ENCODE measurements at regions of chr11 and their contacts with region 1.

Region 1: DNA sequence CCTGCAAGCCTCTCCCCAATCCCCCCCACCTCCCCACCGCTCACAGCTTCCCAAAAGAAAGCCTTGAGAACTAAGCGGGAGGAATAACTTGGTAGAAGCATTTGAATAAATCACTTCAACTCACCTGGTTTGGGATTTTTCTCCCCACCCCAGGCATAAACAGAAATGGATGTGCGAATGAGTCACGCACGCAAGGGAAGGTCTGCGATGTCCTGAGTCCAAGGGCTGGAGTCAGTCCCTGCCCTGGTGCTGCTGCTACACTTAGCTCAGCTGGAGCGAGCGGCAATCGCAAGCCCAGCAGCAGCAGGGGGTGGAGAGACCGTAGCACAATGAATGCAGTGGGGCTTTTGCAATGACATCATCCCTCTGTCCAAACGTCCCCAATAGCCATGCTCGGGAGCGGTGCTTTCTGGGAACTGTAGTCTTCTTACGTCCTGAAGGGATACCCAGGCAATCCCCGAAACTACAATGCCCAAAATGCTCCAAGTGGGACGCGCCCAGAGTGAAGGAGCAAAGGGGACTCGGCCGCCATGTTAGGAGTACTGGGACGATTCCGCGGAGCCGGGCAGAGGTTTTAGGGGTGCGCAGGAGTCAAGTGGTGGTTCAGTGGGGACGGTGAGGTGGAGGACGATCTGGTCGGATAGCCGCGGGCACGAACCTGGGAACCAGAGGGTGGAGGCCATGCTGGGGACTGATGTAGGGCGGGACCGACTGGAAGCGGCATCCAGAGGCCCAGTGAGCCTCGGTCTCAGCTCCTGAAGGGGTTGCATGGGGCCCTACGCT is at the start of gene RAB30:
- DNase-seq: peak; percentile 84 to 99 (median 91)
- ATAC-seq: peak; percentile 94
- H3K4me3 ChIP-seq: peak within 1 kb of the TSS; percentile 86 to 91
- H3K4me3 Mint-ChIP-seq: no peak within 1 kb of the TSS
- H3K27ac ChIP-seq: peak within 1 kb of the TSS; percentile 91 to 96
- H3K27ac Mint-ChIP-seq: no peak within 1 kb of the TSS
- H3K4me1 ChIP-seq: peaks cover 34% of the 10 kb centered on the region
- H3K4me1 Mint-ChIP-seq: peaks cover 16% of the 10 kb centered on the region
- H3K27me3 ChIP-seq: no peaks in the 10 kb centered on the region
- H3K27me3 Mint-ChIP-seq: no peaks in the 10 kb centered on the region
- CTCF ChIP-seq: no peak
- total RNA-seq, gene RAB30: 125 to 134 TPM

Region 2: DNA sequence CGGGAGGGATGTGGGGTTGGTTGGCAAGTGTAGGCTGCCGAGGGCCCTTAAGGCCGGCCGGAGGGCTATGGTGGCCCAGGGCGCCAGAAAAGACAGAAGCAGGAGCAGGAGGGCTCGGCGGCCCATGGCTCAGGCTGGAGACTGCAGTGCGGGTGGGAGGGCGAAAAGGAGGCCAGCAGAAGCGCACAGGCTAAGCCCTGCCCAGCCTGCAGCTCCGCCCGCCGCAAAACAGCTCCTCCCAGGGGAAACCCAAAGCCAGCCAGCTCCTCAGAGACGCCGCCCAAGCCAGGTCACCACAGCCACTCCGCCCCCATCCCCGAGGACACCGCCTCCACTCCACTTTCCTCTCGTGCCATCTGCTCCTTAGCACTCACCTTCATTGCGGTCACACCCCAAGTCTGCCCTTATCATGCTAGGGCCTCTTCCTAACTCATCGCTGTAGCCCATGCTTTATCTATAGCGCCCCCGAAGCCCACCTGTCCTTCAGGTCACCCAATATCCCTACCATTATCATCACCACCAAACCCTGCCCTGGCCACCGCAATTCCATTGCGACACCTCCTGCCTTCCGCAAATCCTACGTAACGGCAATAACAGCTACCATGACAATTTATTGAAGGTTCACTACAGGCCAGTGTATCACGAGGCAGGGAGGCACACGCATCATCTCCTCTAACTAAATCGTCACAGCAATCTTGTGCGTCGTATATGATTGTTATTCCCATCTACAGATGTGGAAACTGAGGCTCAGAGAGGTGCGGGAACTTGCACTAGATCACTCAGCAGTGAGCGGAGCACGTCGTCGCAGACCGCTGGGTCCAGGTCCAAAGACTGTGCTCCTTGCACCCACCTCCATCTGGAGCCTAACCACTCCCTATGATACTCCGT is 171.2 kb before region 1 on chr11 and contains the start of gene PRCP:
- CTCF ChIA-PET with region 1: interaction called, 3 read pairs
- POLR2A ChIA-PET with region 1: interaction called, 14 read pairs
- intact Hi-C with region 1: loop called (anchors 1 kb)
- DNase-seq: peak; percentile 84 to 96 (median 92)
- ATAC-seq: peak; percentile 69
- H3K4me3 ChIP-seq: peak within 1 kb of the TSS; percentile 76 to 93
- H3K4me3 Mint-ChIP-seq: peak within 1 kb of the TSS; percentile 99
- H3K27ac ChIP-seq: peak within 1 kb of the TSS; percentile 94 to 96
- H3K27ac Mint-ChIP-seq: peak within 1 kb of the TSS; percentile 100
- H3K4me1 ChIP-seq: peaks cover 26% of the 10 kb centered on the region
- H3K4me1 Mint-ChIP-seq: peaks cover 48% of the 10 kb centered on the region
- H3K27me3 ChIP-seq: no peaks in the 10 kb centered on the region
- H3K27me3 Mint-ChIP-seq: no peaks in the 10 kb centered on the region
- CTCF ChIP-seq: no peak
- total RNA-seq, gene PRCP: 23.9 to 27.8 TPM

Region 3: GRCh38 chr11:82959987-82960778 is 111.6 kb before region 1 on chr11:
- CTCF ChIA-PET with region 1: interaction called, 4 read pairs
- POLR2A ChIA-PET with region 1: interaction called, 4 read pairs
- intact Hi-C with region 1: loop called in 1 of 2 experiments (anchors 1 kb)
- DNase-seq: peak in 7 of 9 experiments; percentile 25 to 89 (median 42)
- ATAC-seq: peak; percentile 78
- H3K4me3 ChIP-seq: peak overlapping the region; percentile 23 to 38
- H3K4me3 Mint-ChIP-seq: peak overlapping the region; percentile 55
- H3K27ac ChIP-seq: peak overlapping the region; percentile 79 to 89
- H3K27ac Mint-ChIP-seq: peak overlapping the region; percentile 98
- H3K4me1 ChIP-seq: peaks cover 92% of the 10 kb centered on the region
- H3K4me1 Mint-ChIP-seq: peaks cover 87% of the 10 kb centered on the region
- H3K27me3 ChIP-seq: no peaks in the 10 kb centered on the region
- H3K27me3 Mint-ChIP-seq: no peaks in the 10 kb centered on the region
- CTCF ChIP-seq: no peak

Region 4: GRCh38 chr11:83087035-83087434 is 15.3 kb after region 1 on chr11:
- CTCF ChIA-PET with region 1: interaction called, 3 read pairs
- POLR2A ChIA-PET with region 1: interaction called, 5 read pairs
- intact Hi-C with region 1: loop called in 1 of 2 experiments (anchors 1 kb)
- DNase-seq: peak in 1 of 9 experiments; percentile 16
- ATAC-seq: no peak
- H3K4me3 ChIP-seq: no peak overlapping the region
- H3K4me3 Mint-ChIP-seq: no peak overlapping the region
- H3K27ac ChIP-seq: no peak overlapping the region
- H3K27ac Mint-ChIP-seq: peak overlapping the region; percentile 19
- H3K4me1 ChIP-seq: no peaks in the 10 kb centered on the region
- H3K4me1 Mint-ChIP-seq: peaks cover 21% of the 10 kb centered on the region
- H3K27me3 ChIP-seq: no peaks in the 10 kb centered on the region
- H3K27me3 Mint-ChIP-seq: no peaks in the 10 kb centered on the region
- CTCF ChIP-seq: no peak

Region 5: DNA sequence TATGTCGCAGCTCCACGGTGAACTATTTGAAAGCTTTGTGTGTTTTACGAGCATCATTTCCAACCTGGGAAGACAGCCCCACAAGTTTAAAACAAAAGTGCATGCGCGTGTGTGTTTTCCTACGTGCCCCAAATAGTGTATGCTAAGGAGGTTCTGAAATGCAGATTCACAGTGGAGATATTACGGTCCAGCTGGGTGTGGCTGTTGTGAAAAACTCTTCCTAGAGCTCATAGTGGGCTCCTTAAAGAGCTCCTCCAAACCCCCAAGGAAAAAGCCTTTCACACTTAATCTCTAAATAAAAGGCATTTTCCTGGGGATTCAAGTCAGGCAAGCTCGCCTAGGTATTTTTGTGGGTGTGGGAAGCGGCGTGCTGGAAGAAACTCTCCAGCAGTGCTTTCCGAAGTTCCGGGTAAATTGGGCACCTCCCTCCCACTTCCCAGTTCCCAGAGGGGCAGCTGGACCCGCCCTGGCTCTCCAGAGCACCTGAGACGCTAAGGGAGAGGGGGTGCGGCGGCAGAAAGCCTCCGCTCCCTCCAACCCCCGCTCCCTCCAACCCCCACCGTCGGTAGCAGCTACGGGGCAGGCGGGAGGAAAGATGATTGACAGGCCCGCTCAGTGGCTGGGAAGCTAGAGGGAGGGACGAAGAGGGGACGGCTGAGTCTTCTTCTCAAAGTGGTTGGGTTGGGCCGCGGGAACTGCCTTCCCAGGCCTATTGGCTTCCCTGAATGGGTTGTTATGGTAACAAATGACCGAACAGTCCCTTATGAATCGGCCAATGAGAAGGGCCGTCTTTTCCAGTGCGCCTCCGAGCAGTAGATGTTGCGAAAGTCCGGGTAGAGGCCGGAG is 84.6 kb after region 1 on chr11:
- CTCF ChIA-PET with region 1: interaction called, 6 read pairs
- POLR2A ChIA-PET with region 1: interaction called, 54 read pairs
- intact Hi-C with region 1: loop called (anchors 1 kb)
- DNase-seq: peak; percentile 94 to 100 (median 97)
- ATAC-seq: peak; percentile 83
- H3K4me3 ChIP-seq: peak overlapping the region; percentile 89 to 98
- H3K4me3 Mint-ChIP-seq: peak overlapping the region; percentile 100
- H3K27ac ChIP-seq: peak overlapping the region; percentile 97
- H3K27ac Mint-ChIP-seq: peak overlapping the region; percentile 100
- H3K4me1 ChIP-seq: peaks cover 13% of the 10 kb centered on the region
- H3K4me1 Mint-ChIP-seq: peaks cover 28% of the 10 kb centered on the region
- H3K27me3 ChIP-seq: no peaks in the 10 kb centered on the region
- H3K27me3 Mint-ChIP-seq: no peaks in the 10 kb centered on the region
- CTCF ChIP-seq: no peak

Region 6: GRCh38 chr11:83249972-83250593 is 178.3 kb after region 1 on chr11:
- CTCF ChIA-PET with region 1: interaction called, 5 read pairs
- POLR2A ChIA-PET with region 1: no interaction called
- intact Hi-C with region 1: loop called in 1 of 2 experiments (anchors 5 kb)
- DNase-seq: peak in 4 of 9 experiments; percentile 11 to 72 (median 40)
- ATAC-seq: peak; percentile 76
- H3K4me3 ChIP-seq: no peak overlapping the region
- H3K4me3 Mint-ChIP-seq: no peak overlapping the region
- H3K27ac ChIP-seq: no peak overlapping the region
- H3K27ac Mint-ChIP-seq: no peak overlapping the region
- H3K4me1 ChIP-seq: no peaks in the 10 kb centered on the region
- H3K4me1 Mint-ChIP-seq: peaks cover 3% of the 10 kb centered on the region
- H3K27me3 ChIP-seq: no peaks in the 10 kb centered on the region
- H3K27me3 Mint-ChIP-seq: no peaks in the 10 kb centered on the region
- CTCF ChIP-seq: peak; percentile 86

Region 7: GRCh38 chr11:83265331-83265730 is 193.6 kb after region 1 on chr11:
- CTCF ChIA-PET with region 1: no interaction called
- POLR2A ChIA-PET with region 1: no interaction called
- intact Hi-C with region 1: no loop called
- DNase-seq: no peak
- ATAC-seq: no peak
- H3K4me3 ChIP-seq: no peak overlapping the region
- H3K4me3 Mint-ChIP-seq: no peak overlapping the region
- H3K27ac ChIP-seq: no peak overlapping the region
- H3K27ac Mint-ChIP-seq: no peak overlapping the region
- H3K4me1 ChIP-seq: no peaks in the 10 kb centered on the region
- H3K4me1 Mint-ChIP-seq: peaks cover 18% of the 10 kb centered on the region
- H3K27me3 ChIP-seq: no peaks in the 10 kb centered on the region
- H3K27me3 Mint-ChIP-seq: no peaks in the 10 kb centered on the region
- CTCF ChIP-seq: no peak

Measured in CD8-positive, alpha-beta T cell (primary cell).